CD14-positive monocyte (primary cell): ENCODE measurements at regions of chr4 and their contacts with region 1.

Region 1: GRCh38 chr4:38034986-38035882 is 75.0 kb downstream of the PTTG2 start:
- DNase-seq: peak; percentile 33 to 63 (median 50)
- H3K4me3 ChIP-seq: no peak overlapping the region
- H3K4me3 Mint-ChIP-seq: no peak overlapping the region
- H3K27ac ChIP-seq: peak overlapping the region in 1 of 2 donors; percentile 30
- H3K27ac Mint-ChIP-seq: peak overlapping the region in 1 of 7 donors; percentile 25
- H3K4me1 ChIP-seq: no peaks in the 10 kb centered on the region
- H3K4me1 Mint-ChIP-seq: peaks cover under 1% of the 10 kb centered on the region
- H3K27me3 ChIP-seq: no peaks in the 10 kb centered on the region
- H3K27me3 Mint-ChIP-seq: no peaks in the 10 kb centered on the region
- CTCF ChIP-seq: peak; percentile 79

Region 2: DNA sequence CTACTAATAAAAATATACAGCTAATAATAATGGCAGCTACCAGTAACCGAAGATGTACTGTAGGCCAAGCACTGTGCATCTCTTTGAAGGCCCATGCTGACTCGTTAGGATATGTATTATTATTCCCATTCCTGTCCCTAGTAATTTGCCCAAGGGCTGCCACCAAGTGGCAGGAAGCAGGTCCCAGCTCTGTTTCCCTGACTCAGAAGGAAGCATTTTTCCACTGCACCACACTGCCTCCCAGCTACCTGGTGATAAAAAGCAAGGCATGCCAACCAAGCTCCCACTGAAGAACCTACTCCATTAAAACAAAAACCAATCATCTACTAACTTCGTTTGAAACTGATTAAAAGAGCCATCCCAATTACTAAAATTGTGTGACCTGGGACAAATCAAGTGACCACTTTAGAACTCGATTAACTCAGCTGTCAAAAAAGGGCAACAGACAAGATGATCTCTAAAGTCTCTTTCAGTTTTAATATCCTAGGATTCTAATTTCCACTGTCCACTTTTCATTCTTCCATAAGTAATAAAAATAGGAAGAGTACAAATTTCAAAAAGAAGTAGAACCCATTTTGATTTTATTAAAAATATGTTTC is 233.1 kb before region 1 on chr4:
- intact Hi-C with region 1: loop called (anchors 2 kb)
- DNase-seq: no peak
- H3K4me3 ChIP-seq: no peak overlapping the region
- H3K4me3 Mint-ChIP-seq: no peak overlapping the region
- H3K27ac ChIP-seq: no peak overlapping the region
- H3K27ac Mint-ChIP-seq: no peak overlapping the region
- H3K4me1 ChIP-seq: peaks cover 7 to 8% of the 10 kb centered on the region in 2 donors
- H3K4me1 Mint-ChIP-seq: peaks cover 13% of the 10 kb centered on the region
- H3K27me3 ChIP-seq: no peaks in the 10 kb centered on the region
- H3K27me3 Mint-ChIP-seq: peaks cover 0 to 1% (median 0%) of the 10 kb centered on the region in 3 donors
- CTCF ChIP-seq: no peak

Region 3: DNA sequence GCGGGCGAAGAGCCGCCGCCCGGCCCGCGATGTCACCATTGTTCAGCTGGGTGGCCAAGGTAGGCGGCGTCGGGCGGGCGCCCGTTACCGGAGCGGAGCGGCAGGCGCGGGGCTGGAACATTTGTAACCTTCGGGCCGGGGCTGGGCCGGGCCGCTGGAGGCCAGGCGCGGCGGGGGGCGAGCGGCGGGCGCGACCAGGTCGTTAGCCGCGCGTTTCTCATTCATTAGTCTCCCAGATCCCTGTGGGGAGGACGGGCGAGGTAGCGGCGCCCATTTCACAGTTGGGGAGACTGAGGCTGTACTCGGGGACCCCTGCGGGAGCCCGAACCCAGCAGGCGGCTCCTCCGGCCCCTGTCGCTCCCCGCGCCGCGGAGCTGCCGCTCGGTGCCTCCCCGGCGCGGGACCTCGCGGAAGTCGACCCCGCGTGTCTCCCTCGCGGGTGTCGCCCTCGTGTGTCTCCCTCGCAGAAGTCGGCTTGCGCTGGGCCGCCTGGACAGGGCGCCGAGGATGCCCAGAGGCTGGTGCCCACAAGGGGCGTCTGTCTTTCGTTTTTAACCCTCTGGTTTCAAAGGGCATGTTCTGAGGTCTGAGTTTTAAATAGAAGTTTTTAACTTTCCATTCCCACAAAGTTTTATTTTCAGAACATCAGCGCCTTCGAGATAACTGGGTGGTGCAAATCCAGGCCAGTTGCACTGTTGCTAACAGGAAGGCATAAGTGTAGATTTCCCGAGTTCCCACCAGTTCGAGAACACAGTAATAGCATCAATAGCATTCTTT is 57.6 kb before region 1 on chr4:
- intact Hi-C with region 1: loop called in 1 of 2 experiments (anchors 10 kb)
- DNase-seq: peak; percentile 70 to 85 (median 79)
- H3K4me3 ChIP-seq: peak overlapping the region; percentile 41 to 95 (median 83)
- H3K4me3 Mint-ChIP-seq: peak overlapping the region; percentile 86 to 91
- H3K27ac ChIP-seq: peak overlapping the region; percentile 83 to 93
- H3K27ac Mint-ChIP-seq: peak overlapping the region; percentile 84 to 93 (median 91)
- H3K4me1 ChIP-seq: peaks cover 19 to 22% of the 10 kb centered on the region in 2 donors
- H3K4me1 Mint-ChIP-seq: peaks cover 51% of the 10 kb centered on the region
- H3K27me3 ChIP-seq: no peaks in the 10 kb centered on the region
- H3K27me3 Mint-ChIP-seq: no peaks in the 10 kb centered on the region
- CTCF ChIP-seq: peak; percentile 81

Region 4: DNA sequence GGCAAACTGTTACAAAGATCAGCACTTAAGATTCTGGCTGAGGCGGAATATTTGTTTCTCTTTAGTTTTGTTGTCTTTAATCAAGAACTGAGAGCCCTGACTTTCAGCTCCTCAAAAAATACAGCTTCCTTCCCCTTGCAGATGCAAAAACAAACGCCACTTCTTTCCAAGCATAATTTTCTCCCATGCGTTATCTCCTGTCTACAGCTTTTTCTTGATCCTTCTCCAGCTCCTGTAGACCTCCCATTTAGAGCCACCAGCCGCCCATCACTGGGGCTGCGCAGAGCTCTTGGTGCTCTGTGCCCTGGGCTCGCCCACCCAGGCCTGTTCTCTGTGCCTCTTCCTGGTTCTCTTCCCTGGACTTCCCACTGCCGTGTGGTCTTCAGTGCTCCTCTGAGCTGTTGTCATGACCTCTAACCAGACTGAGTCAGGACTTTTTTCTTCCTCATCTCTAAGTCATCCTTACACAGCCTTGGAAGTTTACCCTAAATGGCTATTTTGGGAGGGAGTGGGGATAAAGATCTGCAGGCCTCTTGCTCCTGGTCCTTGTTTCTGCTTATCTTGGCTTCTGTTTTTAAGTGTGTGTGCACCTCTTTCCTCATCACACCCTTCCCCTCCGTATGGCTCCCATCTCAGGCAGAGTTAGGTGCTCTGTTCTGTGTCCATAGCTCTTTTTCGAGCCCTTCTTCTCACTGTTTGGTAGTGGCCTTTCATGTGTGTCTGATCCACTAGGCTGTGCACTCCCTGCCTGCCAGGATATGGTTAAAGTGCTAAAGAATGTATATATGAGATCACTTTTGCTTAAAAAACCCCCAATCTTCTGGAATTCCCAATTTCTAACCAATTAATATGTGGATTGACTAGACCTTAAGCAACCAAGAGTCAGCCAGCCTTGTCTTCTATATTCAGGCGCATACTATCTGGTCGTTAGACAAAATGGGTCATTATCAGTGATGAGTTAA is 47.5 kb after region 1 on chr4:
- intact Hi-C with region 1: no loop called
- DNase-seq: peak in 2 of 3 donors; percentile 63 to 95
- H3K4me3 ChIP-seq: peak overlapping the region in 1 of 3 experiments; percentile 42
- H3K4me3 Mint-ChIP-seq: peak overlapping the region; percentile 67 to 86
- H3K27ac ChIP-seq: peak overlapping the region; percentile 86 to 98
- H3K27ac Mint-ChIP-seq: peak overlapping the region; percentile 92 to 98 (median 95)
- H3K4me1 ChIP-seq: peaks cover 60% of the 10 kb centered on the region in 2 donors
- H3K4me1 Mint-ChIP-seq: peaks cover 53% of the 10 kb centered on the region
- H3K27me3 ChIP-seq: no peaks in the 10 kb centered on the region
- H3K27me3 Mint-ChIP-seq: peaks cover 0 to 2% (median 0%) of the 10 kb centered on the region in 3 donors
- CTCF ChIP-seq: no peak